ENCODE measurements at regions of chr20 and their contacts with region 1.

Region 1: DNA sequence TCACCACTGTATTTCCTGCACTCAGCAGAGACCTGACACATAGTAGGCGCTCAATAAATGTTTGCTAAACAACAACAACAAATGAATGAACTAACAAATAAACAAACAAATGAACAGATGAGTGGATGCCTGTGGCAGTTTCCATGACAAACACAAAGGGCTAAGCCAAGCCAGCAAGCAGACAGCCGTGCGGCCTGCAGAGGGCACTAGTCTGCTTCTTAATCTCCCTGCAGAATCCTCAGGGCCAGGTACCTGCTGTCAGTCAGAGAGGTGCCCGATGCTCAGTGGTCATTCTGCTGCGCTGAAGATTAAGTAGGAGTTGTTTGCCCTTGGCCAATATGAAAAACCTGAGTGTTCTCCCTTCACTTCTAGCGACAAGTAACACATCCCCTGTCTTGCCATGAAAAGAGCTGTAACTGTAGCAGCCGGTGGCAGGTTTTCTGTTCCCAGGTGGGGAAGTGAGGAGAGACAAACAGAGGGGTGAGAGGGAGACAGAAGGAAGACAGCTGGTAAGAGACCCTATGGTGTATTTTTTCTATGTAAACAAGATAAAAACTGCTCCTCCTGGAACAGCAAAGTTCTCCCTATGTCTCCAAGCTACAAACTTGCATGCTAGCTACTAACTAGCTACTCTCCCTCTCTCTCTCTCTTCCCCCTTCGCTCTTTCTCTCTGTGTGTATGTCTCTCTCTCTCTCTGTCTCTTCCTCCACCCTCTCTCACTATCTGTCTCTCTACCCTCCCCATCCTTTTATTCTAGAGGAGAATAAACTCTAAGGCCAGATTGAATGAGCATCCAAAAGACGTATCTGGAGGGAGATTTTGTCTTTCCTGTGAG is at the start of gene MC3R:
- DNase-seq: peak; percentile 14
- H3K4me3 Mint-ChIP-seq: no peak within 1 kb of the TSS
- H3K27ac Mint-ChIP-seq: no peak within 1 kb of the TSS
- H3K4me1 Mint-ChIP-seq: no peaks in the 10 kb centered on the region
- H3K27me3 Mint-ChIP-seq: peaks cover 3% of the 10 kb centered on the region
- total RNA-seq, gene MC3R: not detected in 2 replicates

Region 2: DNA sequence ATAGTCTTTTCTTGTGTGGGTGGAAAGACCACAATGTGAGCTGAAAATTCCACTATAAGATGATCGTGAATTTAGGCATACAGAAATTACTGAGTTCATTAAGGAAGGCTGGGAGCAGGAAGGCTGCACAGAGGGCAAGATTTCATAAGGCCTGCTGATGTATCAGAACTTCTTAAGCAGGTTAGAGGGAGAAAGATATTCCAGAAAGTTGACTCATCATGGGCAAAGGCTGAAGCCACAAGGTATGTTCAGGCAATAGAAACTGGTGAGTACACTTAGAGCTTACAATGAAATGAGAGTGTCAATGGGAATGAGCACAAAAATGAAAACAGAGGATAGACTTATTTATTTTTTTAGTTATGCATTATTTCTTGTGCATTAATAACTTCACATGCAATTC is 861.5 kb before region 1 on chr20:
- intact Hi-C with region 1: no loop called
- DNase-seq: no peak
- H3K4me3 Mint-ChIP-seq: no peak overlapping the region
- H3K27ac Mint-ChIP-seq: no peak overlapping the region
- H3K4me1 Mint-ChIP-seq: no peaks in the 10 kb centered on the region
- H3K27me3 Mint-ChIP-seq: no peaks in the 10 kb centered on the region

Region 3: DNA sequence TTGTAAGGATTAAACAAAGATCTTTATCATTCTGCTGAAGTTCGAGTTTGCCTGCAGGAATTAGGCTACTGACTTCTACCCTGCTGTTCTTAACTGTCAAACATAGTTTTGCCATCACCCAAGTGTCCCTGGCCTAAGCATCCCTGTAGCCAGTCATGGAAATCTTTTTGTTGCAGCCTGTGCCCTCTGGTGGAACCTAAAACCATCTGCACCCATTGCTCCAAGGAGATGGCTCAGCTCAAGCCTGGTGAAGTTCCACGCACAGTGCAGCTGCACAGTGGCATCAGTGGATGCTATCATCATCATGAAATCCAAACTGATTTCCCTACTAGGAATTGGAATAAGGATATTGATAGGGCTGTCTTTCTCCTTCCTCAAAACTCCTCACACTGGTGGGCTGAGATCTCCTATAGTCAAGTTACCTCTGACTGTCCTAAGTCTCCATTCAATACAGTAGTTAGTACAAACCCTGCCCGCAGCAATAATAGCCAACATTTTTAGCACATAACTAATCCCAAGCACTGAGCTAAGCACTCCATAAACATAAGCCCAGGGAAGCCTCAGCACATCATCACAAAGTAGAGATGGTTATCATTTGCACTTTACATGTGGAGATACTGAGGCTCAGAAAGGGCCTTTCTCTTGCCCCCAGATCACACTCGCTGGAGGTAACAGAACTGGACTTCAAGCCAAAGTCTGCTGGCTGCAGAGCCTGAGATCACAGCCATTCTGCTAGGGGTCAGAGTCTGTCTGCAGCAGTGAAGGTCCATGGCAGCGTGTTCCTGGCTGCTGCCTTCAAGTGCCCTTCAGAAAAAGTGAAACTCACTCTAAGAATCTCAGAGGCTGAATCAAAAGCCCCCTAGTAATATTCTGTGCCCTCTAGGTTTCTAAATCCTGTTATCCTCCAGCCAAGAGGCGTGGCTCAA is 76.8 kb before region 1 on chr20:
- intact Hi-C with region 1: no loop called
- DNase-seq: no peak
- H3K4me3 Mint-ChIP-seq: no peak overlapping the region
- H3K27ac Mint-ChIP-seq: no peak overlapping the region
- H3K4me1 Mint-ChIP-seq: no peaks in the 10 kb centered on the region
- H3K27me3 Mint-ChIP-seq: no peaks in the 10 kb centered on the region

Region 4: GRCh38 chr20:56259948-56260347 is 11.8 kb after region 1 on chr20:
- intact Hi-C with region 1: no loop called
- DNase-seq: no peak
- H3K4me3 Mint-ChIP-seq: no peak overlapping the region
- H3K27ac Mint-ChIP-seq: no peak overlapping the region
- H3K4me1 Mint-ChIP-seq: no peaks in the 10 kb centered on the region
- H3K27me3 Mint-ChIP-seq: peaks cover under 1% of the 10 kb centered on the region

Region 5: GRCh38 chr20:56343861-56344381 is 95.8 kb after region 1 on chr20:
- intact Hi-C with region 1: loop called (anchors 1 kb)
- DNase-seq: no peak
- H3K4me3 Mint-ChIP-seq: no peak overlapping the region
- H3K27ac Mint-ChIP-seq: no peak overlapping the region
- H3K4me1 Mint-ChIP-seq: no peaks in the 10 kb centered on the region
- H3K27me3 Mint-ChIP-seq: peaks cover 60% of the 10 kb centered on the region

Region 6: DNA sequence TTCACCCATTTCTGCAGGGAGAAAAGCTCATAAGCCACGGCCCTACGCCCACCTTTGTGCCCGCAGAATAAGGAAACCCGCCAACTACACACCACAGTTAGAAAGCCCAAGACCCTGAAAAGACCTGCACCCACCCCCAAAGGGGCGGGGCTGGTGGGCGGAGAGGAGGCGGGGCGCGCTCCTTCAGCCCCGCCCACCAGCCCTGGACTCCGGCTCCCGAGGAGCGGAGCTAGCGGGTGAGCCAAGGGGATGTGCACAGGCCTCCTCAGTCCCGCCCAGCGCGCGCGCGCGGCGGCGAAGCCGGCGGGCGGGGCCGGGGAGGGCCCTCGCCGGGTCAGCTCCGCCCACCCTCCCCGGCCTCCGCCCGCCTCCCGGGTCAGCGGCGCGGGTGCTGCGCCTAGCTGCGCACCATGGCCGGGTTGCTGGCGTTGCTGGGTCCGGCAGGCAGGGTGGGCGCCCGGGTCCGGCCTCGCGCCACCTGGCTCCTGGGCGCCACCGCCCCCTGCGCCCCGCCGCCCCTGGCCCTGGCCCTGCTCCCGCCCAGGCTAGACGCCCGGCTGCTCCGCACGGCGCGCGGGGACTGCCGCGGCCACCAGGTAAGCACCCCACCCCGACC is 110.5 kb after region 1 on chr20 and contains the start of gene FAM210B:
- intact Hi-C with region 1: loop called (anchors 5 kb)
- DNase-seq: peak; percentile 76
- H3K4me3 Mint-ChIP-seq: peak within 1 kb of the TSS; percentile 85
- H3K27ac Mint-ChIP-seq: peak within 1 kb of the TSS; percentile 48
- H3K4me1 Mint-ChIP-seq: peaks cover 7% of the 10 kb centered on the region
- H3K27me3 Mint-ChIP-seq: peaks cover 7% of the 10 kb centered on the region
- total RNA-seq, gene FAM210B: 6.2 and 6.9 TPM in 2 replicates

Region 7: DNA sequence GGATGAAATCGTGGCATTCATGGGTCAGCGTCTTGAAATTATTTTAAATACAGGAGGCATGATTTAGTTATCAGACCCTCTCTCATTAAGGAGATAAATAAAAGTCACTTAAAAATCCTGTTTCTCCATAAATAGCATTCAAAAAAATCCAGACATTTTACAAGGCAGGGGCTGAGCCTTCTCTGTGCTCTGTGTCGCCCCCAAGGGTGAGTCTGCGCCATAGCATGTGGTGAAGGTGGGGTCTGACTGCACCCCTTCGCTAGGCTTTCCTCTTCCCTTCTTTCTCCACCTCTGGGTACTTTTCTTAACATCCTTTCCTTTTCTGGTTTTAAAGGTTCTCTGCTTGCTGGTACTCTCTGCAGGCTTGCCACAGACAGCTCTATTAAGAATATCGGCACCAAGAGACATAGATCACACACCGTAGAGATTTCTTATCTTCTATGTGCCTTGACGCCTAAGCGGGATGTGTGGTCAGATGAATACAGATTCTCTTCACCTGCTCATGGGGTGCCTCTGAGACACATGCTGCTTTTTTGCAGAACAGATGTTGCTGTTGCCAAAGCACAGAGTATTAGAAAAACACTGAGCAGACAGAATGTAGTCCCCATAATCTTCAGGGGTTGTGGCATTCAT is 256.3 kb after region 1 on chr20:
- intact Hi-C with region 1: loop called (anchors 10 kb)
- DNase-seq: no peak
- H3K4me3 Mint-ChIP-seq: no peak overlapping the region
- H3K27ac Mint-ChIP-seq: peak overlapping the region; percentile 63
- H3K4me1 Mint-ChIP-seq: no peaks in the 10 kb centered on the region
- H3K27me3 Mint-ChIP-seq: no peaks in the 10 kb centered on the region

Region 8: DNA sequence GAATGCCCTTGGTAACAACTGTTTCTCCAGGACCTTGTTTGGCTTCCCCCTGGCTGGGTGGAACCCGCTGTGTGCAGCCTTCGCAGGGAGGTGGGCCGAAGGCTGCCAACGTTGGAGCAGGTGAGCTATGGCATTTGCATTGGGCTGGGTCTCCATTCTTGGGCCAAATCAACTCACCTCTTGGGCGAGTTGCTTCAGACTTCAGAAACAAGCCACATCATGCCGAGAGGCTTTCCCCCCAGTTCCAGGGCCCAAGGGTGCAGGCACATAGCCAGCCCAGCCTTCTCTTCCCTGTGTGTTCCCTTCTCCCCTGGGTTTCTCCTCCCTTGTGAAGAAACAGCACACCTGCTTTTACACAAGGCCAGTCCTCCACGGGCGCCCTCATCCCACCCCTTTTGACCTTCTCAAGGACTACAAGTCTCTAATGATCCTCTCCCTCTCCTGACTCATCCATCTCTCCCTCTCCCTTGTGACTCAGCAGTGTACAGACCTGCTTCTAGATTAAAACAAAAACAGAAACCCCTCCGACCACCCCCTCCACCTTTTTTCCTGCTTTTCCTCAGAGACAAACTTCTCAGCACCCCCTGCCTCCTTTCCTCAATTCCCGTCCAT is 326.5 kb after region 1 on chr20:
- intact Hi-C with region 1: loop called (anchors 1 kb)
- DNase-seq: no peak
- H3K4me3 Mint-ChIP-seq: no peak overlapping the region
- H3K27ac Mint-ChIP-seq: no peak overlapping the region
- H3K4me1 Mint-ChIP-seq: no peaks in the 10 kb centered on the region
- H3K27me3 Mint-ChIP-seq: peaks cover 4% of the 10 kb centered on the region